Cardiac septum (tissue), 1 donor: ENCODE measurements at regions of chr22 and their contacts with region 1.

Region 1: DNA sequence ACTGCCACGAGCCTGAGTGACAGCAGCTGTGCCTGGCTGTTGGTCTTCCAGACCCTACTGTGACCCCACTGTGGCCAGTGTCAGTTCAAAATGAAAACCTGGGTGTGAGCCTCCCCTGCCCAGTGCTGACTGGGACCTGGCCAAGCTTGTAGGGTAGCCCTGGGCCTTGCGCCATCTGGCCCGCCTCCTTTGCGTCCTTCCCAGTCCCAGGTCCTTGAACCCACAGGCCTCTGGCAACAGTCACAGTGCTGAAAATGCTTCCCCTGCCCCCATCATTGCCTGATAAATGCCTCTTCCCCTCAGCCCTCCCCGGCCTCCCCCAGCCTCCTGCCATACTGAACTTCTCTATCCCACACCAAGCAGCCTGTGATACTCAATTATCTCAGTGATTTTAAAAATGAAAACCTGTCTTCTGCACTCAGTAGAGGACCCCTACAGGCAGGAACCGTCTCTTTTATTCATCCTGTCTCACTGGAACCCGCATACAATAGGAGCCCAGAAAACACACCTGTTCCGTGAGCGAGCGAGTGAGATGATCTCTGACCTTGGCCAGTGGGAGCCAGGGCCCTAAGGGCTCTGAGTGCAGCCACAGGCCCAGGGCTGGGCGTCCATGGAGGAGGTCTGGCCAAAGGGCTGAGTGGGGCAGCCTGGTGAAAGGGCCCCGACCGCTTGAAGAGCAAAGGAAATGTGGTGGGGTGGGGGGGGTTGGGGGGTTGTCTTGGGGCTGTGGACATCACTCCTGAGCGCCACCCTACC is 49.7 kb upstream of the TTLL12 start:
- DNase-seq: peak; percentile 86

Region 2: DNA sequence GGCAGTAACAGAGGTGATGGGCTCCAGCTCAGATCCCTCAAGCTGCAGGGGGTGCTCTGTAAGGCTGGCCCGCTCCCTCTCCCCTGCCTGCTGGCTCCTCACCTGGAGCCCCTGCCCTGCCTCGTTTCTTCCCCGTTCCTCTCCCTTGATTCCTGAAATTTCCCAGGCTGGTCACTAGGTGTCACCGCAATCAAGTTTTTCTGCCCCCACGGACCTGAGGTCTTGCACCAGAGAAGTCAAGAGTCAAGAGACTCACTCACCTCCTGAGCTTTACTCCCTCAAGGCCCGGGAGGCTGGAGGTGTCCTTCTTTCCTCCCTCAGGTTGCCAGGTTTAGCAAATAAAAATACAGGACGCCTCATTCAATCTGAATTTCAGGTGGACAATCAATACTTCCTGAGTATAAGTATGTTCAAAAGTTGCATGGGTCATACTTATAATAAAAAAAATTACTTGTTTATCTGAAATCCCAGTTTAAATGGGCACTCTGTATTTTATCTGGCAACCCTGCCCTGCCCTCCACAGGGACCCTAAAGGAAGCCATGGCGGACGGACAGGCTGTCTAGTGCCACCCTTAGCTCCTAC is 37.4 kb after region 1 on chr22:
- intact Hi-C with region 1: loop called (anchors 5 kb)
- DNase-seq: no peak